Activated CD8-positive, alpha-beta T cell treated with anti-CD3 and anti-CD28 coated beads for 36 hours (primary cell): ENCODE measurements at regions of chr1 and their contacts with region 1.

Region 1: DNA sequence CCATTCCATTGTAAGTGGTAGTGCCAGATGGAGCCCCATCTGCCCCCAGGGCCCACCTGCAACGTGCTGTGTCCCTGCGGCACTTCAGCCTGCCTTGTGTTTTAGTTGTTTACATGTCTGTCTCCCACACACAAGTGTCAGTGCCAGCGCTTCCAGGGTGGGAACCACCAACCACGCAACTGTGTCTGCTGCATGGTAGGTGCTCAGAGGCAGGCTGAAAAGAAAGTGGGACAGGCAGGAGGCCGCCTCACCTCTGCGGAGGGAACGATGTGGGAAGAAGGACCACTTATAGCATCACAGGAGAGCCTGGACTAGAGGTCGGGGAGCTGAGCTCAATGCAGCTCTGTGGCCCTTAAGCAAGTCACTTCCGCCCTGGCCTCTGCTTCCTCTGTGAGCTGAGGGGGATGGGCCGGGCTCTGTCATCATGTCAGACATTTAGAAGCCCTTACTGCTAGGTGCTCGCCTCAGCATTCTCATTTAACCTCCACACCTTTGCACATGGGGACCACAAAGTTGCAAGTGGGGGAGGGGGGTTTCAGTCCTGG is 17.9 kb downstream of the SLC9A1 start:
- DNase-seq: peak; percentile 98
- ATAC-seq: peak; percentile 97
- H3K4me3 Mint-ChIP-seq: peak overlapping the region; percentile 70
- H3K27ac Mint-ChIP-seq: peak overlapping the region; percentile 97
- H3K4me1 Mint-ChIP-seq: peaks cover 54% of the 10 kb centered on the region
- H3K27me3 Mint-ChIP-seq: no peaks in the 10 kb centered on the region
- CTCF ChIP-seq: no peak

Region 2: DNA sequence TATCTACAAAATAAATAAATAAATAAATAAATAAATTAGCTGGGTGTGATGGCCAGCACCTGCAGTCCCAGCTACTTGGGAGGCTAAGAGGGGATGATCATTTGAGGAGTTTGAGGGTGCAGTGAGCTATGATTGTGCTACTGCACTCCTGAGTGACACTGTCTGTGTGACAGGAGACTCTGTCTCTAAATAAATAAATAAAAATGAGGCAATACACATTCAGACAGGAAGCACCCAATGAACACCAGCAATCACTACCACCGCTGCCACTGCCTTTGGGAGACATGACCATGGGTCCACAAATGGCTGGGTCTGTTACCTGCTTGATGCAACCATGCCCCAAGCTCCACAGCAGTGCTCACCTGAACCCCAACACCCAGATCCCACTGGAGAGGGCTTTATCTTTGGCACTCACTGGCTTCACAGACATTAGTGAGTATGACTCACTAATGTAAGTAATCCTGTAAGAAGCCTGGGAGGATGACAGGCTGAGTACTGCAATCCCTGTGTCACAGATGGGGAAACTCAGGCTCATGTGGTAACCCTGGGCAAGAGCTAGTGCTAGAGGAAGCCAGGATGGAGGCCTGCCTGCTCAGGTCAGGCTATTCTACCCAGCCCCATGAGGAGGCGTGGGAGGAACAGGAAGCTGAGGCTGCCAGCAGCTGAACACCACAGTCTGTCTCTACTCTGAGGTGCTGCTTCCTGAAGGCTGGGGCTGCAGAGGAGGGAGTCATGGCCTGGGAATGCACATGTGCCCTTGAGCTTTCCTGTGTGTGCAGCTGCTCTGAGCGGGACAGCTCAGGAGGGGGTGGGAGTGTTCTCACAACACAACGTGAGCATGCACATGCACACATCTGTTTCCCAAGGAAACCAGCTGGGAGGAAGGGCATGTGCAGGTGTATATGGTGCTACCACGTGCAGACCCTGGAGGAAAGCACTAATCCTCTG is 25.2 kb before region 1 on chr1:
- CTCF ChIA-PET with region 1: interaction called, 6 read pairs
- POLR2A ChIA-PET with region 1: interaction called, 17 read pairs
- intact Hi-C with region 1: no loop called
- DNase-seq: peak; percentile 92
- ATAC-seq: peak; percentile 97
- H3K4me3 Mint-ChIP-seq: peak overlapping the region; percentile 49
- H3K27ac Mint-ChIP-seq: peak overlapping the region; percentile 90
- H3K4me1 Mint-ChIP-seq: peaks cover 55% of the 10 kb centered on the region
- H3K27me3 Mint-ChIP-seq: no peaks in the 10 kb centered on the region
- CTCF ChIP-seq: no peak

Region 3: DNA sequence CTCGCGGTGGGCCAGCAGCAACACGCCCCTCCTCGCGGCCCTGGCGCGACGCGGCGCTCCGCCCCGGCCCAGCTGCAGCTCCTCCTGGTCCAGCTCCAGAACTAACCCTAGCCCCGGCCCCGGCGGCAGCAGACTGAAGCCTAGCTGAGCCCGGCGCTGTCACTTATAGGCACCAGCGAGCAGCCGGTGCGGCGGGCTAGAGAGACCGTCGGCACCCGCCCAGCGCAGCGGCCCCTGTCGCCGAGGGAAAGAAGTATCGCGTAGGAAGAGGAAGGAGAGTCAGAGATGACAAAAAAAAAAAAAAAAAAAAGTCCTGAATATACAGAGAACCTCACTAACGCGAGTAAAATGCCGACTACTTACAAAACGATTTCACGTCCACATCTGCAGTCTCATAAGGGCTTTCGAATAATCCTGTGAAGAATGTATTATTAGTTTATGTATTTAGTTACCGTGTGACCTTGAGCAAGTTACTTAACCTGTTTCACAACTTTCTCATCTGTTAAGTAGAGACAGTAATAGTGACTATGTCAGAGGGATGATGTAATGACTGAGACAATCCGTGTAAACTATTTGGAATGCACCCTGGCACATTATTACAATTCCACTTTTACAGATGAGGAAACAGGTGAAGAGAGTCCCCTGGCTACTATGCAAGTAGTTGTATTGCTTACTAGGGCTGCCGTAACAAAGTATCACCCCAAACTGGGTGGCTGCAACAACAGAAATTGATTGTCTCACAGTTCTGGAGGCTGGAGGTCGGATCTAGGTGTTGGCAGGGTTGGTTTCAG is 18.1 kb after region 1 on chr1 and contains the start of gene SLC9A1:
- CTCF ChIA-PET with region 1: interaction called, 85 read pairs
- POLR2A ChIA-PET with region 1: interaction called, 172 read pairs
- intact Hi-C with region 1: no loop called
- DNase-seq: peak; percentile 91
- ATAC-seq: peak; percentile 94
- H3K4me3 Mint-ChIP-seq: peak within 1 kb of the TSS; percentile 79
- H3K27ac Mint-ChIP-seq: peak within 1 kb of the TSS; percentile 96
- H3K4me1 Mint-ChIP-seq: peaks cover 46% of the 10 kb centered on the region
- H3K27me3 Mint-ChIP-seq: no peaks in the 10 kb centered on the region
- CTCF ChIP-seq: peak; percentile 88
- total RNA-seq, gene SLC9A1: 14.8 to 15.3 TPM

Region 4: DNA sequence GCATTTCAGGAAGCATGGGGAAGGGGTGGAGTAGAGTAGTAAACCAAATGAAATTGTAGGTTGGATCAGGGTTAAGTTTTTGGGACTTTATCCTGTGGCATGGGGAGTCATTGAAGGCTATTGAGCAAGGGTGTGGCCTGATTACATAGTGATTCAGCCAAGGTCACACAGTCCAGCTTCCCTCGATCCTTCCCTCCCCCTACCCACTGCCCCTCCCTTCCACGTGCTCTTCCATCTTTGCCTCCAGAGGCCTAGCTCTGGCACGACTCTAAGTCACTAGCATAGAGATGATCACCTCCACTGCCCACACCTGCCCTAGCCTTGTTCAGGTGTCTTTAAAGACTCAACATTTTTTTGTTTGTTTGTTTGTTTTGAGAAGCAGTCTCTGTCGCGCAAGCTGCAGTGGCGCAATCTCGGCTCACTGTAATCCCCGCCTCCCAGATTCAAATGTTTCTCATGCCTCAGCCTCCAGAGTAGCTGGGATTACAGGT is 55.0 kb after region 1 on chr1:
- CTCF ChIA-PET with region 1: no interaction called
- POLR2A ChIA-PET with region 1: no interaction called
- intact Hi-C with region 1: no loop called
- DNase-seq: no peak
- ATAC-seq: no peak
- H3K4me3 Mint-ChIP-seq: no peak overlapping the region
- H3K27ac Mint-ChIP-seq: no peak overlapping the region
- H3K4me1 Mint-ChIP-seq: no peaks in the 10 kb centered on the region
- H3K27me3 Mint-ChIP-seq: no peaks in the 10 kb centered on the region
- CTCF ChIP-seq: no peak